Psoas muscle (tissue), 8 donors: ENCODE measurements at regions of chr3 and their contacts with region 1.

Region 1: DNA sequence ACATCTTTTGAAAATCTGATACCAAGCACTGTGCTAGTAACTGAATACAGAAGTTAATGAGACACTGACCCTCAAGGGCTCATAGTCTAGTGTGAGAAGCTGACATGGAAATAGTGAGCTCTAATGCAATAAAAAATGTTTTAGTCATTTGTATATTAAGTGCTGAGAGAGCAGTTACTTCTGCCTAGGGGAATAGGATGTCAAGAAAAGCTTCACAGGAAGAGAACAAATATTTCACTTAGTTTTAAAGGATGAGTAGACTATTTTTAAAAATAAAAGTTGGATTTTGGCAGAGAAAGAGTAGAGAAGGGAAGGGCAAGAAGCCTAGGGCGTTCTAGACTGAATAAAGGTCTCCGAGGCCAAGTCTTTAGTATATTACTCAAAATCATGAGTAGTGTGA is 158.4 kb downstream of the ATG7 start:
- DNase-seq: no peak
- ATAC-seq: no peak
- H3K4me3 ChIP-seq: no peak overlapping the region
- H3K27ac ChIP-seq: no peak overlapping the region
- H3K4me1 ChIP-seq: peaks cover 6% of the 10 kb centered on the region
- H3K27me3 ChIP-seq: no peaks in the 10 kb centered on the region
- CTCF ChIP-seq: no peak

Region 2: GRCh38 chr3:11391174-11391879 is 39.3 kb before region 1 on chr3:
- intact Hi-C with region 1: loop called in 1 of 2 experiments (anchors 1 kb)
- DNase-seq: no peak
- ATAC-seq: peak in 2 of 4 donors; percentile 22 to 34
- H3K4me3 ChIP-seq: no peak overlapping the region
- H3K27ac ChIP-seq: no peak overlapping the region
- H3K4me1 ChIP-seq: peaks cover 34% of the 10 kb centered on the region
- H3K27me3 ChIP-seq: no peaks in the 10 kb centered on the region
- CTCF ChIP-seq: no peak